OCI-LY7 (cell line): ENCODE measurements at regions of chr7 and their contacts with region 1.

Region 1: DNA sequence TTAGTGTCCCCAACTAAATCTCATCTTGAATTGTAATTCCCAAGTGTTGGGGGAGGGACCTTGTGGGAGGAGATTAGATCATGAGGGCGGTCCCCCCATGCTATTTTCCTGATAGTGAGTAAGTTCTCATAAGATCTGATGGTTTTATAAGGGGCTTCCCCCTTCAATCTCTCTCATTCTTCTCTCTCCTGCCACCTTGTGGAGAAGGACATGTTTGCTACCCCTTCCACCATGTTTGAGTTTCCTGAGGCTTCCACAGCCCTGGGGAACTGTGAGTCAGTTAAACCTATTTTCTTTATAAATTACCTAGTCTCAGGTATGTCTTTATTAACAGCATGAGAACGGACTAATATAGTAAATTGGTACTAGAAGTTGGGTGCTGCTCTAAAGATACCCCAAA is 365.6 kb downstream of the ANKRD7 start:
- DNase-seq: peak; percentile 21
- H3K4me3 ChIP-seq: no peak overlapping the region
- H3K27ac ChIP-seq: no peak overlapping the region
- H3K4me1 ChIP-seq: no peaks in the 10 kb centered on the region
- CTCF ChIP-seq: peak; percentile 73

Region 2: GRCh38 chr7:118259115-118259514 is 331.0 kb before region 1 on chr7:
- CTCF ChIA-PET with region 1: no interaction called
- POLR2A ChIA-PET with region 1: no interaction called
- intact Hi-C with region 1: loop called (anchors 2 kb)
- DNase-seq: no peak
- H3K4me3 ChIP-seq: no peak overlapping the region
- H3K27ac ChIP-seq: no peak overlapping the region
- H3K4me1 ChIP-seq: no peaks in the 10 kb centered on the region
- CTCF ChIP-seq: peak; percentile 65

Region 3: GRCh38 chr7:118352854-118353453 is 237.2 kb before region 1 on chr7:
- CTCF ChIA-PET with region 1: no interaction called
- POLR2A ChIA-PET with region 1: no interaction called
- intact Hi-C with region 1: loop called (anchors 5 kb)
- DNase-seq: peak; percentile 29
- H3K4me3 ChIP-seq: no peak overlapping the region
- H3K27ac ChIP-seq: no peak overlapping the region
- H3K4me1 ChIP-seq: peaks cover 11% of the 10 kb centered on the region
- CTCF ChIP-seq: peak; percentile 68